Ascending aorta (tissue), 2 donors: ENCODE measurements at regions of chr1 and their contacts with region 1.

Region 1: DNA sequence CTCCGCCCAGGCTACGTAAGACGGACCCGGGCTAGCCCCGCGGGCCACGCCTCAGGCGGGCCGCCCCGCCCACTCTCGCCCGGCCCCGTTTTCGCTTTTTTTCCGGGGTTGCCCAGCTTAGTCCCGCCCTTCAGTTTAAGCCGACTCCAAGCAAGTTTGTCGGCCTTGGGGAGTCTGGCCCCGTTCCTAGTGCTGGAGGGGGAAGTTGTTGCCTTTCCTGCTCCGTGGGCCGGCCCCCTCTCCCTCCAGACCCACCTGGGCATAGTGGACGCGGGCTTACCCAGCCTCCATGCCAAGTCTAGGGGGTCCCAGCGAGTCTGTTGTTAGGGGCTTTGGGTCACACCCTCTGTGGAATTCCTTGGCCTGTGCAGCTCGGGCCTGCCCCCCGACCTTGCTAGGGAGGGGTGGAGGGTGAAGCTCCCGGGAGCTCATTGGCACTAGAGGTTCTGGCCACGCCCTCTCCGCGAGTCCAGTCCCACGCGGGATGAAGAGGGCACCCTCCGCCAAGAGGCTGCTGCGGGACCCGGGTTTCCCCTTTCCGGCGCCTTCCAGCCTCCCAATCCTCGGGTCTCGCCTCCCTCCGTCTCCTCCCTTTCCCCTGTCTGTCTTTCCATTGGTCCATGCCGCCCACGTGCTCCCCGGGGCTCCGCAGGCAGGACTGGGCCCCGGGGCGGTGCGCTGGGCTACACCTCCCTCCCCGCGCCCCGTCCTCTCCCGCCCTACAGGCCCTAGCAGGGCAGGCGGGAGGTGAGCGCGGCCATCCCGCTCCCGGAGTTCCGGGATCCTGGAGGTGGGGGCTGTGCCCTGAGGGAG is 3.3 kb downstream of the RUSC1 start:
- DNase-seq: peak; percentile 88 to 97
- H3K4me3 ChIP-seq: peak overlapping the region; percentile 74 to 89
- H3K27ac ChIP-seq: peak overlapping the region; percentile 96 to 97
- H3K4me1 ChIP-seq: peaks cover 9 to 22% of the 10 kb centered on the region in 2 donors
- H3K27me3 ChIP-seq: no peaks in the 10 kb centered on the region
- CTCF ChIP-seq: no peak

Region 2: DNA sequence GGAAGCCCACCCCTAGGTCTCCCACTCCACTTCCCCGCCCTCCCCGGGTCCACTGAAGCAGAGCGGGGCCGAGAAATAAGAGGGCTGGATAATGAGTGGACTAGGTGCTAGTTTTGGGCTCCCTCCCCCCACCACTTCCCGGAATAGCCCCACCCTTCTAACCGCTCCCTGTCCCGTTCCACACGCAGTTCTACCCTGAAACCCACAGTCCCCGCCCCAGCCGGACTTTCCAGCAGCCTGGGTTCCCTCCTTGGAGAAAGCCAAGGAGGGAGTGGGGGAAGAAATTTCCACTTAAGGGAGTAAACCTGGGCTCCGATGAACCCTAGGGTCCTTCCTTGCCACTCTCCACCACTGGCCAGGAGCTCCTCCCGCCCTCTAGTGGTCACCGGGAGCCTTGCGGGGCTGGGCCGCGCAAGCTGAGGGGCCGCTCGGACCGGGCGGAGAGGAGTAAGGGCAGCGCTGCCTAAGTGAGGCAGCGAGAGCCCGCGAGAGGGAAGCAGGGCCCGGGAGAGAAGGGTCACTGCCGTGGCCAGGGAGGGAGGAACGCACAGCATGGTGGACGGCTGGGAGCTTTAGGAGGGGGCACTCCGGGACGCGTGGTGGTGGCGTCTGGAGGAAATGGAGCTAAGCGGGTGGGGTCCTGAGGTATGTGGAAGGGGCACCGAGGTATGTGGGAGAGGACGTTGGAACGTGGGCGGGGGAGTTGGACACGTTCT is 130.6 kb before region 1 on chr1:
- intact Hi-C with region 1: loop called (anchors 5 kb)
- DNase-seq: peak; percentile 61 to 94
- H3K4me3 ChIP-seq: peak overlapping the region; percentile 59 to 69
- H3K27ac ChIP-seq: peak overlapping the region; percentile 84 to 87
- H3K4me1 ChIP-seq: peaks cover 19 to 20% of the 10 kb centered on the region in 2 donors
- H3K27me3 ChIP-seq: no peaks in the 10 kb centered on the region
- CTCF ChIP-seq: peak; percentile 96 to 99 (median 98)

Region 3: GRCh38 chr1:155250633-155251449 is 73.2 kb before region 1 on chr1:
- intact Hi-C with region 1: loop called (anchors 1 kb)
- DNase-seq: peak; percentile 55 to 96
- H3K4me3 ChIP-seq: peak overlapping the region; percentile 37 to 42
- H3K27ac ChIP-seq: peak overlapping the region; percentile 19 to 39
- H3K4me1 ChIP-seq: peaks cover 16 to 21% of the 10 kb centered on the region in 2 donors
- H3K27me3 ChIP-seq: no peaks in the 10 kb centered on the region
- CTCF ChIP-seq: peak; percentile 99 to 100 (median 99)

Region 4: DNA sequence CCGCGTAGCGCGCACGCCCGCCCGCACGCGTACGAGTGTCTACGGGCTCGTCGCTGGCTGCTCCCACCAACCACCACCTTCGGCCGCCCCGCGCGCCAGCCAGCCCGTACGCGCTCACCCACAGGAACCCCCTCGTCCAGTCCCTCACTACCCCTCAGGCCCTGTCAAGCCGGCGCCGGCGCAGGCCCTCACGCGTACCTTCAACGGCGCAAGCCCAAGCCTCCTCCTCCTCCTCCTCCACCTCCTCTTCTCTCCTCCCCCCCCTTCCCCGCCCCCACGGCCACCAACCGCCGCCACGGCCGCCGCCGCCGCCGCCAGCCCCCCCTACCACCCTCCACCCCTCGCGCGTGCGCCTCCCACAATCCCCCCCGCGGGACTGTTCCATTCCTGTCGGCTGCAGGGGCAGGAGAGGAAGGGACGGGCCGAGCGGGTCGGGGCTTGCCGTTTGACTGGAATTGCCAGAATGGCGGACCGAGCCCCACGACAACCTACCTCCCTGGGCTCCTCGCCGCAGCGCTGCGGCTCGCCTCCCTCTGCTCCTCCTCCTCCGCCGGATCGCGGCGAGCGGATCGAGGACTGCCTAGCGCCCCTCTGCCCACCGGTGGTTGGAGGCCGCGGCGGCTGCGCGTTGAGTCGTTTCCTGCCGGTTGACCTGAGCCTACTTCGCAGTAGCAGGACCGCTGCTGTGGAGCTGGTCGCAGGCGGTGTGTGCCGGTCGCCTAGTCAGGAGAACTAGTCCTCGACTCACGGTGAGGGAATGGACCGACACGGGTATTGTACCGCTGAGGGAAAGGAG is 238.8 kb after region 1 on chr1 and contains the start of gene ASH1L:
- intact Hi-C with region 1: loop called (anchors 2 kb)
- DNase-seq: peak; percentile 66 to 93
- H3K4me3 ChIP-seq: peak within 1 kb of the TSS; percentile 87 to 91
- H3K27ac ChIP-seq: peak within 1 kb of the TSS; percentile 97 to 99
- H3K4me1 ChIP-seq: peaks cover 6 to 25% of the 10 kb centered on the region in 2 donors
- H3K27me3 ChIP-seq: no peaks in the 10 kb centered on the region
- CTCF ChIP-seq: peak in 1 of 3 experiments; percentile 22
- total RNA-seq, gene ASH1L: 16.2 TPM